GM23248 (cell line): ENCODE measurements at regions of chr11 and their contacts with region 1.

Region 1: DNA sequence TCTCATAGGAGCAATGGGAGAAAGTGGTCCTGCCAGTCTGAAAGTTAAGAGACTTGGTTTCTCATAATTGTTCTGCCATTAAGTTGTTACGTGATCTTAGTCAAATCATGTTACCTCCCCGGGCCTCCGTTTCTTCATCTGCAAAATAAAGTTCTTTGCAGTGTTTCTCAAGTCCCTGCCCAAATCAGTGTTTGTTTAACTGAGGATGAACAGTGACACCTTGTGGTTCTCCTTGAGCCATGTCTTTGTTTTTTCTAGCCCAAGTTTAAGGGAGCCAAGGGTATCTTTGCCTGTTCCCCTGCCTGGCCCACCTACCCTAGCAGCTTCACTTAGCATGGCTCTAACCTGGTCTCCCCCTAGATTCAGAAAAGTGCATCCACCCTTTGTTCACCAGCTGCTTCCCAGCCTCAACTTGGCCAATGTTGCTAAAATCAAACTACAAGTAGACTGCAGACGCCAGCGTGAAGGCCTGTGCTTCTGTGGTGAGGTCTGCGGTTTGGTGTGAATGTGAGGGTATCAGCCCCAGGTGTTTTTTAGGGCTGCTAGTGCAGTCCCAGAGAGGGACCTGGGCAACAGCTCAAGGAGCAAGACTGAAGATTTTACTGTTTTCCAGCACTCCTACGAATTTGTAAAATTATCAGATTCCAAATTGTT is 35.5 kb downstream of the FZD4 start:
- DNase-seq: peak; percentile 83
- H3K4me3 ChIP-seq: no peak overlapping the region
- H3K27ac ChIP-seq: peak overlapping the region; percentile 34
- H3K4me1 ChIP-seq: peaks cover 41% of the 10 kb centered on the region
- H3K27me3 ChIP-seq: no peaks in the 10 kb centered on the region

Region 2: DNA sequence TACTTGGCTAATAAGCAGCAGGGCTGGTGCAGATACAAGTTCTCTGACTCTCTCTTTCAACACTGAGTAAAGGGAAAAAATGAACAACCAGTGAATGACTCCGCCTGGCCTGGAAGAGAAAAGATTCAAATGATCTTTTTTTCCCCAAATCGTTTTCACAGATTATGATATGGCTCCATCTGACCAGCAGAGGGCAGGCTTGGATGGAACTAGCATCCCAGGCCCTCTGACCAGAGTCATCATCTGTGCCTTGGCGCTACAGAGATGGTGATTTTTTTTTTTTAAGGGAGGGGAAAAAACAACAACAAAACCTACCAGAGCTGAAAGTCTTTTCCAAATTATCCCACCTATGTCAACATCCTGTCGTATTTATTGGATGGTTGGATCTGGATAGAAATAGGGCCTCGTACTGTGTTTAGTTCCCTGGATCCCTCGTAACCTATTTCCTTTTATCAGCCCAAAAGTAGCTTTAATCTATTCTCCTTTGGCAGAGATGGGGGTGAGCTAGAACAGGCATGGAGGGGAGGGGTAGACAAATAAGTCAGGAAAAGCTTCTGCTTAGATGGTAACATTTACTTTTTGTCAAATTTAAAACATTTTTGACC is 49.6 kb before region 1 on chr11:
- in situ Hi-C with region 1: loop called (anchors 10 kb)
- DNase-seq: peak; percentile 88
- H3K4me3 ChIP-seq: no peak overlapping the region
- H3K27ac ChIP-seq: peak overlapping the region; percentile 48
- H3K4me1 ChIP-seq: peaks cover 14% of the 10 kb centered on the region
- H3K27me3 ChIP-seq: no peaks in the 10 kb centered on the region